Gastrocnemius medialis (tissue), 4 donors: ENCODE measurements at regions of chr7 and their contacts with region 1.

Region 1: GRCh38 chr7:44847508-44847920 is 373 bp downstream of the H2AZ2 start:
- DNase-seq: peak; percentile 82 to 87
- ATAC-seq: peak; percentile 78 to 82
- H3K4me3 ChIP-seq: peak overlapping the region; percentile 65 to 72 (median 66)
- H3K27ac ChIP-seq: peak overlapping the region; percentile 90 to 93 (median 92)
- H3K4me1 ChIP-seq: peaks cover 24 to 43% of the 10 kb centered on the region in 2 donors
- H3K27me3 ChIP-seq: no peaks in the 10 kb centered on the region
- CTCF ChIP-seq: peak; percentile 92 to 98 (median 98)
- POLR2A ChIP-seq: no peak

Region 2: DNA sequence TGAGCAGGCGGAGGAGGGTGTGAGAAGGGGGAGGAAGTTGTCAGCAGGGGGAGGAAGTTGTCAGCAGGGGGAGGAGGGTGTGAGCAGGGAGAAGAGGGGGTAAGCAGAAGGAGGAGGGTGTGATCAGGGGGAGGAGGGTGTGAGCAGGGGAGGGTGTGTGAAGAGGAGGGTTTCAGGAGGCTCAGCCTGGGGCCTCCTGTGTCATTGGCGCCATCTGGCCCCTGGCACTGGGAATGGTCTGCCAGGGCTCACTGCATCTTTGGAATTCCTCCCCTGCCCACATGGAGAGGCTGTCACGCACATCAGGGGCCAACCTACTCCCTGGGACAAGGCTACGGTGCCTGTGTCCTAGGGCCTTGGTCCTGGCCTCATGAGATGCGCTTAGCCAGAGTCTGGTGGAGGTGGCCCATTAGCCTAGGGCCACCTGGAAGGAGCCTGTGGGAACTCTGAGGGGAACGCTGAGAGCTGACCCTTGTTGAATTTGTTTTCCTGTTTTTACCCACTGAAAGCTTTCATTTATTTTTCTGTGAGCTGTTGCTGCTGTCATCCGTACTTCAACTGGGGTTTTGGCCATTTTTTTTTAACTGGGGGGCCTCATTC is 540.1 kb before region 1 on chr7:
- in situ Hi-C with region 1: no loop called
- intact Hi-C with region 1: loop called (anchors 5 kb)
- DNase-seq: no peak
- ATAC-seq: peak; percentile 26 to 40
- H3K4me3 ChIP-seq: no peak overlapping the region
- H3K27ac ChIP-seq: peak overlapping the region; percentile 1 to 83 (median 41)
- H3K4me1 ChIP-seq: peaks cover 20 to 36% of the 10 kb centered on the region in 2 donors
- H3K27me3 ChIP-seq: no peaks in the 10 kb centered on the region
- CTCF ChIP-seq: no peak
- POLR2A ChIP-seq: no peak

Region 3: DNA sequence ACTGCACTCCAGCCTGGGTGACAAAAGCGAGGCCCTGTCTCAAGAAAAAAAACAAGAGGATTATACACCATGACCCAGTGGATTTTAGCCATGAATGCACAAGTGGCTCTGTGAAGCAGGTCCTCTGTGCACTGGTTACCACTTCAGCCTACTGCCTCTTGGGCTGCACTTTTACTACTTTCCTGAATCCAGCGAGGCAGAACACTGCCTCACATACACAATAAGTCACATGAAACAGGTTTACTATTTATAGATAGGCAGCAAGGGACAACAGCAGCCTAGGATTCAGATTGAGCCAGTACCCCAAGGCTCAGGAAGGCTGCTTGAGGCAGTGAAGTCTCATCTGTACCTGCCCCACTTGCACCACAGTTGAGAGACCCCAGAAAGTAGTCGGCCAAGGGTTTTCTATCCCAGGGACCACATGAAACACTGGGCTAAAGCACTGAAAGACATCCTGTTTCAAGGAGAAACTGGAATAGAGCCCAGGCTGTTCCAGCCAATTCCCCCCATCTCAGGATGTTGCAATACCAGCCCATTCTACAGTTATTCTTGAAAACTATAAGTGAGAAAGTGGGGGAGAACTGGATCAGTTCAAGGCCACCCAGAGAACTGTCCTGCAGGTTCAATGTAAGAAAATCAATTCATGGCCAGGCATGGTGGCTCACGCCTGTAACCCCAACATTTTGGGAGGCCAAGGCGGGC is 251.4 kb before region 1 on chr7:
- in situ Hi-C with region 1: loop called in 1 of 4 experiments (anchors 10 kb)
- intact Hi-C with region 1: no loop called
- DNase-seq: peak in 1 of 2 donors; percentile 56
- ATAC-seq: peak; percentile 98 to 99
- H3K4me3 ChIP-seq: no peak overlapping the region
- H3K27ac ChIP-seq: peak overlapping the region; percentile 77 to 88 (median 83)
- H3K4me1 ChIP-seq: peaks cover 10 to 15% of the 10 kb centered on the region in 2 donors
- H3K27me3 ChIP-seq: no peaks in the 10 kb centered on the region
- CTCF ChIP-seq: no peak
- POLR2A ChIP-seq: peak; percentile 53 to 57

Region 4: GRCh38 chr7:44748045-44748947 is 99.2 kb before region 1 on chr7 and contains the start of gene ZMIZ2:
- in situ Hi-C with region 1: no loop called
- intact Hi-C with region 1: loop called (anchors 2 kb)
- DNase-seq: peak; percentile 90 to 91
- ATAC-seq: peak; percentile 86 to 88
- H3K4me3 ChIP-seq: peak within 1 kb of the TSS; percentile 72 to 84 (median 78)
- H3K27ac ChIP-seq: peak within 1 kb of the TSS; percentile 89 to 97 (median 94)
- H3K4me1 ChIP-seq: peaks cover 21 to 28% of the 10 kb centered on the region in 2 donors
- H3K27me3 ChIP-seq: no peaks in the 10 kb centered on the region
- CTCF ChIP-seq: no peak
- POLR2A ChIP-seq: peak; percentile 83 to 84
- total RNA-seq, gene ZMIZ2: 10.7 to 19.8 (median 14.0) TPM

Region 5: DNA sequence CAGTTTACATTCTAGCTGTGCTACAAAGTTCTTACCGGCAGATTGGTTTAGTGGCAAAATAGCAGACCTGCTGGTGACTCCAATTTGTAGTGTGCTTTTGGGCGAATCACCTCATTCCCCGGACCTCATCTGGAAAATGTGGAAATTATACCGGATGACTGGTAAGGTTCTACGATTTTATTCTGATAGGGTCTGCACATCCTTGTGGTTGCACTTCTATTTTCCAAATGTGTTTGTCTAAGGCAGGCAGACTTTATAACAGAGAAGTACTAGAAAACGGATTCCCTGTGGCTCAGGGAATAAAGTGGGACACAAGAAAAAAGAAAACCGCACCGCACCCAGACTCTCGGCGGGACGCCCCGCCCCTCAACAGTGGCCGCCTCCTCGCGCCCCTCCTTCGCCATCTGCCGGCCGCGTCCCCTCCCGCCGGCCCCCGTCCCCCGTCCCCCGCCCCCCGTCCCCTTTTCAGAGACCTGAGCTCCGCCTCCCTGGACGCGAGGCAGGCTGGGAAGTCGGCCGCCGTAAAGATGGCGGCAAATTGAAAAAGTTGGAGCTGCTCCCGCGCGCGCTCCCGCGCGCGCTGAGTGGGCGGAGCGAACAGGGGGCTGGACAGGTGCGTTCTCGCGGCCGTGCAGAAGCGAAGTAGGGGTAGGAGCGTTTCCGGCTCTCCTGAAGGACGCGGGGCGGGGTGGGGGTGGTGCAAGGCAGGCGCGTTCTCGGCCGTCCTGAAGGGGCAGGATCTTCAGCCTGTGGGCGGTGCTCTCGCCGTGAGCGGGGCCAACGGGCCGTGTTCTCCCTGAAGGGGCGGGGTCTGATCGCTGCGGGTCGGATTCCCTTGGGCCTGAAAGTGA is 152.0 kb after region 1 on chr7:
- in situ Hi-C with region 1: no loop called
- intact Hi-C with region 1: loop called (anchors 2 kb)
- DNase-seq: peak; percentile 99
- ATAC-seq: peak; percentile 93 to 95
- H3K4me3 ChIP-seq: peak overlapping the region; percentile 58 to 71 (median 62)
- H3K27ac ChIP-seq: peak overlapping the region; percentile 85 to 94 (median 92)
- H3K4me1 ChIP-seq: peaks cover 13 to 21% of the 10 kb centered on the region in 2 donors
- H3K27me3 ChIP-seq: no peaks in the 10 kb centered on the region
- CTCF ChIP-seq: peak in 1 of 5 experiments; percentile 22
- POLR2A ChIP-seq: peak; percentile 55 to 63

Region 6: GRCh38 chr7:45514944-45515343 is 667.4 kb after region 1 on chr7:
- in situ Hi-C with region 1: no loop called
- intact Hi-C with region 1: no loop called
- DNase-seq: no peak
- ATAC-seq: no peak
- H3K4me3 ChIP-seq: no peak overlapping the region
- H3K27ac ChIP-seq: no peak overlapping the region
- H3K4me1 ChIP-seq: no peaks in the 10 kb centered on the region
- H3K27me3 ChIP-seq: no peaks in the 10 kb centered on the region
- CTCF ChIP-seq: no peak
- POLR2A ChIP-seq: no peak